A549 (cell line): ENCODE measurements at regions of chr13 and their contacts with region 1.

Region 1: GRCh38 chr13:99176309-99177276 is 24.1 kb upstream of the UBAC2 start:
- DNase-seq: peak; percentile 57 to 59
- ATAC-seq: peak; percentile 95 to 98
- H3K4me3 ChIP-seq: no peak overlapping the region
- H3K27ac ChIP-seq: peak overlapping the region in 1 of 2 experiments; percentile 50; a peak in 2 of 6 replicates
- H3K4me1 ChIP-seq: no peaks in the 10 kb centered on the region
- CTCF ChIP-seq: peak; percentile 77
- EP300 ChIP-seq: no peak
- POLR2A ChIP-seq: no peak
- RAD21 ChIP-seq: peak; percentile 81 to 83

Region 2: GRCh38 chr13:99018418-99019180 is 158.0 kb before region 1 on chr13:
- CTCF ChIA-PET with region 1: no interaction called
- POLR2A ChIA-PET with region 1: no interaction called
- DNase-seq: no peak
- ATAC-seq: no peak; a peak in 1 of 6 replicates
- H3K4me3 ChIP-seq: no peak overlapping the region
- H3K27ac ChIP-seq: 0 out of 6 replicates have a peak overlapping the region, but pooled peaks of 1 of the 2 experiments have one; percentile 22
- H3K4me1 ChIP-seq: peaks cover 12% of the 10 kb centered on the region; the same call in 2 of the 3 replicates
- CTCF ChIP-seq: no peak
- EP300 ChIP-seq: no peak
- POLR2A ChIP-seq: no peak
- RAD21 ChIP-seq: no peak

Region 3: GRCh38 chr13:99151516-99151915 is 25.1 kb before region 1 on chr13:
- CTCF ChIA-PET with region 1: interaction called, 10 read pairs
- POLR2A ChIA-PET with region 1: no interaction called
- DNase-seq: peak; percentile 50 to 70
- ATAC-seq: peak; percentile 87 to 91
- H3K4me3 ChIP-seq: no peak overlapping the region
- H3K27ac ChIP-seq: peak overlapping the region; percentile 79 to 89
- H3K4me1 ChIP-seq: peaks cover 40% of the 10 kb centered on the region
- CTCF ChIP-seq: no peak
- EP300 ChIP-seq: no peak
- POLR2A ChIP-seq: no peak
- RAD21 ChIP-seq: no peak

Region 4: GRCh38 chr13:99158846-99159245 is 17.7 kb before region 1 on chr13:
- CTCF ChIA-PET with region 1: interaction called, 17 read pairs
- POLR2A ChIA-PET with region 1: no interaction called
- DNase-seq: no peak
- ATAC-seq: no peak
- H3K4me3 ChIP-seq: no peak overlapping the region
- H3K27ac ChIP-seq: 0 out of 6 replicates have a peak overlapping the region, but pooled peaks of 1 of the 2 experiments have one; percentile 17
- H3K4me1 ChIP-seq: peaks cover 3% of the 10 kb centered on the region; the same call in 1 of the 3 replicates
- CTCF ChIP-seq: no peak
- EP300 ChIP-seq: no peak
- POLR2A ChIP-seq: no peak
- RAD21 ChIP-seq: no peak

Region 5: GRCh38 chr13:99200432-99201167 is 24.0 kb after region 1 on chr13 and contains the start of gene UBAC2:
- CTCF ChIA-PET with region 1: interaction called, 11 read pairs
- POLR2A ChIA-PET with region 1: interaction called, 8 read pairs
- DNase-seq: peak; percentile 80 to 92
- ATAC-seq: peak; percentile 91 to 93
- H3K4me3 ChIP-seq: peak within 1 kb of the TSS; percentile 90
- H3K27ac ChIP-seq: peak within 1 kb of the TSS; percentile 94 to 96
- H3K4me1 ChIP-seq: peaks cover 7% of the 10 kb centered on the region
- CTCF ChIP-seq: no peak
- EP300 ChIP-seq: no peak
- POLR2A ChIP-seq: peak; percentile 86
- RAD21 ChIP-seq: no peak
- polyA plus RNA-seq, gene UBAC2: 92.8 and 103 TPM in 2 replicates

Region 6: GRCh38 chr13:99269627-99270241 is 93.1 kb after region 1 on chr13:
- CTCF ChIA-PET with region 1: interaction called, 23 read pairs
- POLR2A ChIA-PET with region 1: no interaction called
- DNase-seq: peak in 1 of 2 experiments; percentile 45
- ATAC-seq: peak in 1 of 2 experiments; percentile 83; a peak in 4 of 6 replicates
- H3K4me3 ChIP-seq: no peak overlapping the region
- H3K27ac ChIP-seq: no peak overlapping the region
- H3K4me1 ChIP-seq: no peaks in the 10 kb centered on the region
- CTCF ChIP-seq: peak; percentile 66
- EP300 ChIP-seq: no peak
- POLR2A ChIP-seq: no peak
- RAD21 ChIP-seq: peak; percentile 54 to 58; a peak in 4 of 5 replicates